B cell (primary cell): ENCODE measurements at regions of chr19 and their contacts with region 1.

Region 1: DNA sequence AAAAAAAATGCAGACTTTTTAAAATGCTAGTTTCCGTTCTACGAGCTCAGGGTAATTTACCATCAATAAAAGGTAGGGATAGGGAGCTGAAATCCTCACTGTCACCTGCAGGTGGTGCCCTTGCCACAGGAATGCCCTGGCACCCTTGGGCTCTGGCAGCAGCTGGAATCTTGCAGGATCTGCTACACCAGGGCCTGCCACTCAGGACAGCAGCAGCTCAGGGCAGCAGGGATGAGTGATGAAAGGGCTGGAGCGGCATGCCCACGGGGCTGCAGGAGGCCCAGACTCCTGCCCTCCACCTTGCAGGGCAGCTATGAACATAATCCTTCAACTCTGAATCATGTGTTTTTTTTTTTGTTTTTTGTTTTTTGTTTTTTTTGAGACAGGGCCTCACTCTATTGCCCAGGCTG is 54.0 kb downstream of the GNG7 start:
- DNase-seq: peak; percentile 87
- ATAC-seq: peak; percentile 81
- H3K4me3 ChIP-seq: no peak overlapping the region
- H3K4me3 Mint-ChIP-seq: no peak overlapping the region
- H3K27ac ChIP-seq: no peak overlapping the region
- H3K27ac Mint-ChIP-seq: peak overlapping the region; percentile 50
- H3K4me1 ChIP-seq: peaks cover 8 to 38% of the 10 kb centered on the region in 2 donors
- H3K4me1 Mint-ChIP-seq: peaks cover 47% of the 10 kb centered on the region
- H3K27me3 ChIP-seq: no peaks in the 10 kb centered on the region
- H3K27me3 Mint-ChIP-seq: no peaks in the 10 kb centered on the region
- CTCF ChIP-seq: peak; percentile 93

Region 2: DNA sequence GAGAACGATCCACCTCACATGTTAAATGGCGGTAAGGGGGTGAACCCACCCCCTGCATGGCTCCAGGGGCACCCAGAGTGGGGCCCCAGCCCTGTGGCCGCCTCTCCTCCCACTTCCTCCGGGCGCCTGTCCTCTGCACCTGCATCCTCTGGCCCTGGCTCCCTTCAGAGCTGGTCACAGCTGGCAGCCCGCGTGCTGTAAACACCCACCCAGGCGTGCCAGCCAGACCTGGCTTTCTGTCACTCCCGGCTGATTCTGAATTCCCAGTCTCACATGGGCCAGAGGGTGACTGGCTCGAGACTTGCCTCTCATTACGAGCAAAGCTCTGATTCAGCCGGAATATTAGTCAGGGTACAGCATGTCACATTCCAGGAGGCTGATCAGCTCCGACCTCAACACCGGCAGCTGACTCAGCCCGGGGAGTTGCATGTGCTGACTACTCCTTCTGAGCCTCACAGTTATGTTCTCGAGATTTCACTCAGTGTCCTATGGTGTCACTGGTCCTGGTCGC is 21.2 kb before region 1 on chr19:
- CTCF ChIA-PET with region 1: interaction called, 12 read pairs
- POLR2A ChIA-PET with region 1: no interaction called
- intact Hi-C with region 1: no loop called
- DNase-seq: peak; percentile 88
- ATAC-seq: peak; percentile 62
- H3K4me3 ChIP-seq: peak overlapping the region in 4 of 5 experiments; percentile 13 to 47 (median 24)
- H3K4me3 Mint-ChIP-seq: peak overlapping the region; percentile 86
- H3K27ac ChIP-seq: peak overlapping the region; percentile 96 to 97
- H3K27ac Mint-ChIP-seq: peak overlapping the region; percentile 98
- H3K4me1 ChIP-seq: peaks cover 93 to 99% of the 10 kb centered on the region in 2 donors
- H3K4me1 Mint-ChIP-seq: peaks cover 90% of the 10 kb centered on the region
- H3K27me3 ChIP-seq: no peaks in the 10 kb centered on the region
- H3K27me3 Mint-ChIP-seq: no peaks in the 10 kb centered on the region
- CTCF ChIP-seq: no peak

Region 3: GRCh38 chr19:2678043-2678671 is 29.6 kb after region 1 on chr19:
- CTCF ChIA-PET with region 1: interaction called, 16 read pairs
- POLR2A ChIA-PET with region 1: interaction called, 3 read pairs
- intact Hi-C with region 1: no loop called
- DNase-seq: peak; percentile 91
- ATAC-seq: peak; percentile 59
- H3K4me3 ChIP-seq: no peak overlapping the region
- H3K4me3 Mint-ChIP-seq: peak overlapping the region; percentile 49
- H3K27ac ChIP-seq: peak overlapping the region; percentile 99 to 100
- H3K27ac Mint-ChIP-seq: peak overlapping the region; percentile 88
- H3K4me1 ChIP-seq: peaks cover 56 to 66% of the 10 kb centered on the region in 2 donors
- H3K4me1 Mint-ChIP-seq: peaks cover 70% of the 10 kb centered on the region
- H3K27me3 ChIP-seq: no peaks in the 10 kb centered on the region
- H3K27me3 Mint-ChIP-seq: no peaks in the 10 kb centered on the region
- CTCF ChIP-seq: no peak

Region 4: GRCh38 chr19:2726904-2727639 is 78.5 kb after region 1 on chr19:
- CTCF ChIA-PET with region 1: interaction called, 14 read pairs
- POLR2A ChIA-PET with region 1: no interaction called
- intact Hi-C with region 1: no loop called
- DNase-seq: peak; percentile 41
- ATAC-seq: no peak
- H3K4me3 ChIP-seq: peak overlapping the region in 2 of 5 experiments; percentile 6 to 9
- H3K4me3 Mint-ChIP-seq: peak overlapping the region; percentile 70
- H3K27ac ChIP-seq: peak overlapping the region in 1 of 2 donors; percentile 6
- H3K27ac Mint-ChIP-seq: no peak overlapping the region
- H3K4me1 ChIP-seq: peaks cover 20 to 26% of the 10 kb centered on the region in 2 donors
- H3K4me1 Mint-ChIP-seq: peaks cover 22% of the 10 kb centered on the region
- H3K27me3 ChIP-seq: peaks cover 0 to 7% (median 2%) of the 10 kb centered on the region in 4 experiments
- H3K27me3 Mint-ChIP-seq: peaks cover 4% of the 10 kb centered on the region
- CTCF ChIP-seq: no peak

Region 5: GRCh38 chr19:2750808-2751443 is 102.4 kb after region 1 on chr19:
- CTCF ChIA-PET with region 1: interaction called, 156 read pairs
- POLR2A ChIA-PET with region 1: interaction called, 19 read pairs
- intact Hi-C with region 1: loop called (anchors 1 kb)
- DNase-seq: no peak
- ATAC-seq: no peak
- H3K4me3 ChIP-seq: no peak overlapping the region
- H3K4me3 Mint-ChIP-seq: no peak overlapping the region
- H3K27ac ChIP-seq: no peak overlapping the region
- H3K27ac Mint-ChIP-seq: no peak overlapping the region
- H3K4me1 ChIP-seq: peaks cover 8 to 18% of the 10 kb centered on the region in 2 donors
- H3K4me1 Mint-ChIP-seq: peaks cover 10% of the 10 kb centered on the region
- H3K27me3 ChIP-seq: no peaks in the 10 kb centered on the region
- H3K27me3 Mint-ChIP-seq: no peaks in the 10 kb centered on the region
- CTCF ChIP-seq: no peak

Region 6: GRCh38 chr19:2867025-2867991 is 218.8 kb after region 1 on chr19 and contains the start of gene ZNF556:
- CTCF ChIA-PET with region 1: interaction called, 30 read pairs
- POLR2A ChIA-PET with region 1: no interaction called
- intact Hi-C with region 1: loop called (anchors 1 kb)
- DNase-seq: no peak
- ATAC-seq: no peak
- H3K4me3 ChIP-seq: no peak within 1 kb of the TSS
- H3K4me3 Mint-ChIP-seq: no peak within 1 kb of the TSS
- H3K27ac ChIP-seq: no peak within 1 kb of the TSS
- H3K27ac Mint-ChIP-seq: no peak within 1 kb of the TSS
- H3K4me1 ChIP-seq: no peaks in the 10 kb centered on the region
- H3K4me1 Mint-ChIP-seq: peaks cover 5% of the 10 kb centered on the region
- H3K27me3 ChIP-seq: no peaks in the 10 kb centered on the region
- H3K27me3 Mint-ChIP-seq: peaks cover 9% of the 10 kb centered on the region
- CTCF ChIP-seq: no peak
- total RNA-seq, gene ZNF556: not detected in 2 replicates